ENCODE measurements at regions of chr19 and their contacts with region 1.

Region 1: DNA sequence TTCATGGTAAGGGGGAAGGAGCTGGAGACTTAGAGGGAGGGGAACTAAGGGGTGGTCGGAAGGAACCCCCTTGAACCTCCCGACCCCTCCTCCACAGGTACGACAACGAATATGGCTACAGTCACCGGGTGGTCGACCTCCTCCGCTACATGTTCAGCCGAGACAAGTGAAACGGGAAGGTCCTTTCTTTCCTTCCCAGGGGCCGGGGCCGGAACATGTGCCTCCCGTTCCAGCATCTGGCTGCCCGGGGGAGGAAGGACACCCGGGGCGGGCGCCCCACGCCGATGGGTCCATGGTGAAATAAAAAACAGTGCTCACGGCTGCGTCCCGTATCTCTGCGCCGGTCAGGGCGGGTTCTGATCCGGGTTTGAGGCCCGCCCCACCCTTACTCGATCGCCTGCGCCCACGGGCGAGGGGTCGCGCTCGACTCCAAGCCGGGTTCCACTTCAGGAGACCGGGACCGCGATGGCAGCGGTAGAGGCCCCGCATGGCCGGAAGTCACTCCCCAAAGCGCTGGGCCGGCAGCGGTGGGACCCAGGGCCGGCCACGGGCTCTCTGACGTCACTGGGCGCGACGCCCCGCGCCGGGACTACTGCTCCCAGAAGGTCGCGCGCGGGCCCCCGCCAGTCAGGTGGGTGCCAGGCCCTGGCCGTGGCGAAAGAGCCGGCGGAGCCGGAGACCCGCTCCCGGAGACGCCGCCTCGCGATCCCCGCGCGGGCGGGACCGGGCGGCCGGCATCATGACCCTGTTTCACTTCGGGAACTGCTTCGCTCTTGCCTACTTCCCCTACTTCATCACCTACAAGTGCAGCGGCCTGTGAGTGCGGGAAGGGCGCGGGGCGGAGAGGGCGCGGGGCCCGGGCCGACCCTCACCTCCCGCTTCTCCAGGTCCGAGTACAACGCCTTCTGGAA is at the start of gene TMEM147:
- DNase-seq: peak; percentile 98
- CTCF ChIP-seq: no peak

Region 2: DNA sequence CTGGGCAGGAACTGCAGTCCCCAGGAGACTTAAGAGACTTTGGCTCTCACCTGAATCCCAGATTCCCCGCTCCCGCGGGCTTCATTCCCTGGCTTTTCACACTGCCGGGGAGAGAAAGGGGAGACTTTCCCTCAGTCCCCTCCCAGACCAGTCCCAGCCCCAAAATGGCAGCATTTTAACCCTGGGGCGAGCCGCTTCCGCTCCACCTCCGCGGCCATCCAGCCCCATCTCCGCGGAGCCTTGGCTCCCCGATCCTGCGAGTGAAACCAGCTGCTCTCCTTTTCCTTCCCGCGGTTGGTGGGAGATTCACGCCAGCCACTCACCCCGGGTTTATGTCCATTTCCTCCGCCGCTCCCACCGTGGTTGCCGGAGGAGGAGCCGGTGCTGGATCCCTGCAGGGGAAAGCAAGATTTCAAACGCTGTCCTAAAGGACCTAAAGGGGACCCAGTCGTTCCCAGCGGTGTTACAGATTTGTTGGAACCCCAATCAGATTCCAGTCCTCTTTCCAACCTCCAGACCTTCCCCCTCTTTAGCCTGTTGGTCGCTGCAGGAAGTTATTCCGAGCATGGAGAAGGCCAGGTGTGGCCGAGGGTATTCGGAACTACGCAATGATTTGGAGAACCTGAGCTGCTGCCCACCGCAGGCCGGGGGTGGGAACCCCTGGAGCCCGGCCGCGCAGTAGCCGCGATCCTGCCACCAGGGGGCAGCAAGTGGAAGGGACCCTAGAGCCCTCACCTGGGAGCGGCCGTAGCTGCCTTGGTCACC is 35.2 kb before region 1 on chr19:
- CTCF ChIA-PET with region 1: interaction called, 22 read pairs
- POLR2A ChIA-PET with region 1: no interaction called
- DNase-seq: peak; percentile 93
- CTCF ChIP-seq: peak; percentile 94

Region 3: GRCh38 chr19:35533822-35534521 is 11.3 kb before region 1 on chr19:
- CTCF ChIA-PET with region 1: interaction called, 11 read pairs
- POLR2A ChIA-PET with region 1: no interaction called
- DNase-seq: peak; percentile 48
- CTCF ChIP-seq: no peak

Region 4: GRCh38 chr19:35557539-35558399 is 12.5 kb after region 1 on chr19:
- CTCF ChIA-PET with region 1: interaction called, 44 read pairs
- POLR2A ChIA-PET with region 1: no interaction called
- DNase-seq: peak; percentile 72
- CTCF ChIP-seq: peak; percentile 3

Region 5: GRCh38 chr19:35565016-35565856 is 20.0 kb after region 1 on chr19:
- CTCF ChIA-PET with region 1: interaction called, 21 read pairs
- POLR2A ChIA-PET with region 1: no interaction called
- DNase-seq: no peak
- CTCF ChIP-seq: no peak

Region 6: DNA sequence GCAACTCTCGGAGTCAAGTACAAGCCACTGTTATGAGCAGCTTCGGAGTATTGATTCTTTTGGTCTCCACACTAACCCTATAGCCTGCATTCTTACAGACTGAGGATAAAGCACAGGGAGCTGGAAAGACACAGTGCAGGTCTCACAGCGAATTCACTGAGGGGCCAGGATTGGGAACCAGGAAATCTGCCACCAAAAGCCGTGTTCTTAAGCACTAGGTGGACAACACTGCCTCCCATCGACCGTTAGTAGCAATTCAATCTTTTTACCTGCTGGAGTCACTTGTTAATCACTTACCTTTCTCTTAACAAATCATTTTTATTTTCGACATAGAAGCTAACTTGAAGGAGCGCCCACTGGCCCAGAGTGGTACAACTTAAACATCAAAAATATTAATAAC is 47.0 kb after region 1 on chr19:
- CTCF ChIA-PET with region 1: interaction called, 49 read pairs
- POLR2A ChIA-PET with region 1: no interaction called
- DNase-seq: peak; percentile 66
- CTCF ChIP-seq: peak; percentile 53

Region 7: GRCh38 chr19:35609851-35610353 is 64.6 kb after region 1 on chr19:
- CTCF ChIA-PET with region 1: interaction called, 23 read pairs
- POLR2A ChIA-PET with region 1: no interaction called
- DNase-seq: peak; percentile 65
- CTCF ChIP-seq: no peak

Region 8: GRCh38 chr19:36401475-36401874 is 856.2 kb after region 1 on chr19:
- CTCF ChIA-PET with region 1: no interaction called
- POLR2A ChIA-PET with region 1: no interaction called
- DNase-seq: no peak
- CTCF ChIP-seq: no peak

Measured in GM10248 (cell line).